Natural killer cell (primary cell): ENCODE measurements at regions of chr12 and their contacts with region 1.

Region 1: DNA sequence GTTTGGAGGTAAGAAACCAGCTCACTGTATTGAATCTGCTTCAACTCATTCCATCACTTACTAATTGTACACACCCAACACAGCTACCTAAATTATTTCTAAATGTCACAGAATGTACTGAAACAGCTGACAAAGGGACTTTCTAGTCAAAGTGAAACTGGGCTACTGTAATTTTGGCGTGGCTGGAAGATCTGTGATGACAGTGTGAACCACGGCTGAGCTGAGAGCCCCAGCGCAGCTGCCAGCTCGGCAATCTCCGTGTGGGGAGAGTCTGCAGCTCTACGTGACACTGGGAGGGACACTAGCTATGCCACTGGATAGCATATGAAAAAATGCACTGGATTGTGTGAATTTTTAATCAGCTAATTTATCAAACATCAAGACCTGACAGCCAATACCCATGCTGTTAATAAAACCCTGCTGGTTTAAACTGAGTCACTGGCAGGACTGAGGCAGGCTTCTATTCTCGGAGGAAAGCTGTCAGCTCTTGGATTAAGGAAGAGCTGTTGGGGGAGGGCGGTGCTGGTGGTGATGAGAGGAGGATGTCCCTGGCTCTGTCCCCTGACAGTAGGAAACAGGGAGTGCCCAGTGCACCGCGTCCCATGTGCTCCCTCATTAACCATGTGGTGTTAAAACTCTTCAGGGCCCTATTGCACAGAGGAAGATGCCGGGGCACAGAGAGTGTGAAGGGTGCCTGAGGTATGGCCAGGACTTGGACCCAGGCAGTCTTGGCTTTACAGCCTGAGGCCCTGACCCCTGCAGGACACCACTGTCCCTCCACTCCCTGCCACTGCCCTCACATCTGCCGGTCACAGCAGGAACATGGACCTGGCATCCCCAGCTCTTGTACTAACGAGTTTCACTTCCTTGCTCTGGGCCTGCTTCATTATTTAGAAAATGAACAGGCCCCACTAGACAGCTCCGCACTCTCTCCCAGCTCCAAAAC is 13.3 kb downstream of the SLC15A4 start:
- DNase-seq: peak; percentile 70 to 73
- ATAC-seq: peak; percentile 64 to 84 (median 68)
- H3K4me3 ChIP-seq: peak overlapping the region; percentile 2
- H3K4me3 Mint-ChIP-seq: peak overlapping the region; percentile 94
- H3K27ac ChIP-seq: peak overlapping the region; percentile 97
- H3K27ac Mint-ChIP-seq: peak overlapping the region; percentile 99
- H3K4me1 ChIP-seq: peaks cover 51% of the 10 kb centered on the region
- H3K4me1 Mint-ChIP-seq: peaks cover 63 to 65% of the 10 kb centered on the region in 2 donors
- H3K27me3 ChIP-seq: no peaks in the 10 kb centered on the region
- H3K27me3 Mint-ChIP-seq: no peaks in the 10 kb centered on the region
- CTCF ChIP-seq: no peak

Region 2: DNA sequence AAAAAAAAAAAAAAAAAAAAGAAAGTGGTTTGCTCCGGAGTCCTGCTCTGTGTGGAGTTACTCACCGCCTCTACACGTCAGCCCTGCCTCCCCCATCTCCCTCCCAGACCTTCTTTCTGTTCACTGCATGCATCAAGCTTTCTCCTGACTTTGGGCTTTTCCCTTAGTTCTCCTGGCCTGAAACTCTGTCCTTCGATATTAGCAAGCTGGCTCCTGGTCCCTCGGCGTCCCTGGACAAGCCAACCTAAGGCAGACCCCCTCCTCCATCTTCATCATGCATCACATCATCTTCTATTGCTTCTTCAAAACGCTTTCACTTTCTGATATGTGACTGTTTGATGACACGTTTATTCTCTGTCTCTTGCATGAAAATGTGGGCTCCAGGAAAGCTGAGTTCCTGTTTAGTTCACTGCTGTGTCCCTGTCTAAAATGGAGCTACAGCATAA is 27.3 kb before region 1 on chr12:
- intact Hi-C with region 1: loop called (anchors 1 kb)
- DNase-seq: peak; percentile 59 to 72
- ATAC-seq: peak; percentile 83 to 89 (median 85)
- H3K4me3 ChIP-seq: peak overlapping the region; percentile 1
- H3K4me3 Mint-ChIP-seq: peak overlapping the region; percentile 86
- H3K27ac ChIP-seq: peak overlapping the region; percentile 91
- H3K27ac Mint-ChIP-seq: peak overlapping the region; percentile 96 to 97
- H3K4me1 ChIP-seq: peaks cover 23% of the 10 kb centered on the region
- H3K4me1 Mint-ChIP-seq: peaks cover 28 to 39% of the 10 kb centered on the region in 2 donors
- H3K27me3 ChIP-seq: no peaks in the 10 kb centered on the region
- H3K27me3 Mint-ChIP-seq: no peaks in the 10 kb centered on the region
- CTCF ChIP-seq: no peak

Region 3: GRCh38 chr12:128823916-128824839 is 13.7 kb after region 1 on chr12 and contains the start of gene SLC15A4:
- intact Hi-C with region 1: loop called (anchors 1 kb)
- DNase-seq: peak; percentile 93
- ATAC-seq: peak; percentile 81 to 93 (median 87)
- H3K4me3 ChIP-seq: peak within 1 kb of the TSS; percentile 74
- H3K4me3 Mint-ChIP-seq: peak within 1 kb of the TSS; percentile 88
- H3K27ac ChIP-seq: peak within 1 kb of the TSS; percentile 78
- H3K27ac Mint-ChIP-seq: peak within 1 kb of the TSS; percentile 83 to 86
- H3K4me1 ChIP-seq: peaks cover 57% of the 10 kb centered on the region
- H3K4me1 Mint-ChIP-seq: peaks cover 36 to 51% of the 10 kb centered on the region in 2 donors
- H3K27me3 ChIP-seq: no peaks in the 10 kb centered on the region
- H3K27me3 Mint-ChIP-seq: no peaks in the 10 kb centered on the region
- CTCF ChIP-seq: no peak
- total RNA-seq, gene SLC15A4: 176 to 306 (median 250) TPM

Region 4: GRCh38 chr12:128840862-128841468 is 30.5 kb after region 1 on chr12:
- intact Hi-C with region 1: no loop called
- DNase-seq: no peak
- ATAC-seq: no peak
- H3K4me3 ChIP-seq: no peak overlapping the region
- H3K4me3 Mint-ChIP-seq: no peak overlapping the region
- H3K27ac ChIP-seq: no peak overlapping the region
- H3K27ac Mint-ChIP-seq: peak overlapping the region in 1 of 2 donors; percentile 73
- H3K4me1 ChIP-seq: peaks cover 11% of the 10 kb centered on the region
- H3K4me1 Mint-ChIP-seq: peaks cover 10 to 15% of the 10 kb centered on the region in 2 donors
- H3K27me3 ChIP-seq: no peaks in the 10 kb centered on the region
- H3K27me3 Mint-ChIP-seq: peaks cover 0 to 4% of the 10 kb centered on the region in 2 donors
- CTCF ChIP-seq: no peak